K562 (cell line): ENCODE measurements at regions of chr11 and their contacts with region 1.

Region 1: DNA sequence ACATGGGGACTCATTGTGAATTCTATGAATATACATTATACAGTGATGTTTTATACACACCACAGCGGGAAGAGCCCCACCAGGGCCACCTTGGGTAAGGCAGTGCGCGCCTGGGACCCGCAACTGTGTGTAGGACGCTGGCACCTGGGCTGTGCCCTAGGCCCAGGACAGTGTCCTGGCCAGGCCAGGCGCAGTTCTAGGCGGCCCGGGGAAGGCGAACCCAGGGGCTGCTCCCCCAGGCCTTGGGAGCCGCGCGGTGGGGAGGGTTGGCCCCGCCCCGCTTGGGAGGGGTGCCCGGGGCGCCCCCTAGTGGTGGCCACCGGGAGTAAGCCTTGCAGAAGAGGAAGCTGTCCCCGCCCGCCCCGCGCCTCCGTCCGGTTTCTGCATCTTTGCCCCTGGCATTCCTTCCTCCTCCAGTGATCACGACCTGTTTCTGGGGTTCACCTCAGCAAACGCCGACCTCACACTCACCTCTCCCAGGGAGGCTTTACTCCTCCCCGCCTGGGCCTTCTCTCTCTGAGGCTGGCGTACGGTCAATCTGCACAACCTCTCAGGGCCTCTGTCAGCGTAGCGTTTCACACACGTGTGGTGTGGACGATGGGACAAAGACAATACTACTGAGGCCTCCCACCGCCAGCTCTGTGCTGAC is 9.5 kb upstream of the EHD1 start:
- DNase-seq: peak; percentile 90 to 92 (median 92)
- ATAC-seq: peak; percentile 83
- H3K4me3 ChIP-seq: peak overlapping the region; percentile 8; the same call in 1 of the 2 replicates
- H3K27ac ChIP-seq: peak overlapping the region; percentile 82
- H3K4me1 ChIP-seq: peaks cover 44 to 80% of the 10 kb centered on the region in 2 experiments
- H3K27me3 ChIP-seq: no peaks in the 10 kb centered on the region
- CTCF ChIP-seq: peak; percentile 92 to 93 (median 92)
- EP300 ChIP-seq: no peak; the same call in 1 of the 2 replicates
- POLR2A ChIP-seq: peak; percentile 66
- RAD21 ChIP-seq: peak; percentile 41 to 55; a peak in 3 of 4 replicates

Region 2: DNA sequence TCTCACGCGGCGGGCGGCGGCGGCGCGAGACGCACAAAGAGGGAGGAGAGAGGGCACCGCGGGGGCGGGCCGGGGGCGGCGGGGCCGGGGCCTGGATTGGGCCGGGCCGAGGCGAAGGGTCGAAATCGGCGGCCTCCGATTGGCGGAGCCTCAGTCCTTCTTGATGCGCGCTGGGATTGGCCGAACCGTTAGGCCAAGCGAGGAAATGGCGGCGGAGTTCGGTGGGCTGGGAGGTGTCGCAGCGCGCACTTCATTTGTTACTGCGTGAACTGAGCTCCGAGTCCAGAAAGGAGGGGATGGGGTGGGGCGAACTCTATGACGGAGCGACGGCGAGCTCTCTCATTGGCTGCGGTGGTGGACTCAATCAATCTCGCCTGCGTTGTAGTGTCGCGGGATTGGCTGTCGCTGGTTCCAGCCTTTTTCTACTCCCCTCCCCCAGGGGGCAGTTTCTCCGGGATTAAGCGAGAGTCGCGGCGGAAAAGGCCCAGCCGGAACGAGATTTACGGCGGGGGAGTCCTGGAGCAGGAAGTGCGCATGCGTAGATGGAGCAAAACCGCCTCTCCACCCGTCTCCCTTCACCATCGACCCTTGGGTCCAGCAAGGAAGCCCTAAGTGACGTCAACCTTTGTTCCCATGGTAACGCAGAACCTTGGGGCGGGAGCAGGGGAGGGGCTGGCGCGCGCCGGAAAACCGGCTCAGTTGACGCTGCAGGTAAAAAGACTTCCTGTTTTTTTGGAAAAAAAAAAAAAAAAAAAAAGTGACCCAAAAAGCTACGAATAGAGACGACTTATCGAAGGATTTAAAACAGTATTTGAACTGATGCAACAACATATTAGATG is 109.2 kb before region 1 on chr11 and contains the start of gene SF1:
- CTCF ChIA-PET with region 1: no interaction called
- POLR2A ChIA-PET with region 1: interaction called, 3 read pairs
- in situ Hi-C with region 1: no loop called
- intact Hi-C with region 1: loop called (anchors 5 kb)
- DNase-seq: peak; percentile 96 to 100 (median 98)
- ATAC-seq: peak; percentile 97
- H3K4me3 ChIP-seq: peak within 1 kb of the TSS; percentile 67
- H3K27ac ChIP-seq: peak within 1 kb of the TSS; percentile 97
- H3K4me1 ChIP-seq: peaks cover 6 to 18% of the 10 kb centered on the region in 2 experiments; a peak in 3 of 5 replicates
- H3K27me3 ChIP-seq: no peaks in the 10 kb centered on the region
- CTCF ChIP-seq: peak; percentile 13 to 42 (median 17); a peak in 3 of 6 replicates
- EP300 ChIP-seq: peak; percentile 54
- POLR2A ChIP-seq: peak; percentile 89
- RAD21 ChIP-seq: no peak
- polyA plus RNA-seq, gene SF1: 13.1 to 14.0 TPM

Region 3: DNA sequence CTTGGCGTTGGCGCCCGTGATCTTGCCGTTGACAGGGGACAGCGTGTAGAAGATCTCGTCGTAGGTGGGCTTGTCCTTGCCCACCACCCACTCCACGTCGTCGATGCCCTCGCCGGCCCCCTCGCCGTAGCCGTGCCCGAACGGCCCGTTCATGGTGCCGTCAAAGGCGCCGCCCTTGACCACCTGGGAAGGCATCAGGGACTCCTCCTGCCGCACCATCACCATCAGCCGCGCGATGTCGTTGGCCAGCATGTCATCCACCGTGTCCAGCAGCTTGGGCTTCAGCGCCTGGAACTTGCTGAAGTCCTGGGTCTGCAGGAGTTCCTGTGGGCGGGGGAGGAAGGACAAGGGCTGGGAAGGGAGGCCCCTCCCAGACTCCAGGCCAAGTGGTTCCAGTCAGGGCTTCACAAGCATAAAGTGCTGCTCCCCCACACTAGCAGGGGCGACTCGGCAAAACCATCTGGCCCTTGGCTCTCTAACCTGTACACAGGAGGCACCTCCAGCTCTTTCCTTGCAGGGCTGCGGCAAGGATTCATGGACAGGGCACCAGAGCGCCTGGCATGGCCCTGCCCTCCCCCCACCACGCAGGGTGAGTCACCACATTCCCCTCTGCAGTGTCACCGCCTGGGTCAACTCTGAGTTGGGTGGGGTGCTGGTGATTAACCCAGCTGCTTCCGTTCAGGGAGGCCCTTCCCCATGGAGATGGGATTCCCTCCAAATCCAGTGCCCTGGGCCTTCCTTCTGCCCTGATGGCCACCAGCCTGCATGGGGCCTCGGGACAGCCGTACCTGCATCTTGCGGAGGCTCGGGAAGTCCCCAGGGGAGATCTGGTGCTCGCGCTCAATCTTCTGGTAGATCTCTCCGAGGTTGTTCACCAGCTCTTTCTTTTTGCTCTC is 33.1 kb before region 1 on chr11:
- CTCF ChIA-PET with region 1: no interaction called
- POLR2A ChIA-PET with region 1: interaction called, 12 read pairs
- in situ Hi-C with region 1: loop called (anchors 5 kb)
- intact Hi-C with region 1: no loop called
- DNase-seq: peak; percentile 80 to 86 (median 83)
- ATAC-seq: peak; percentile 85
- H3K4me3 ChIP-seq: no peak overlapping the region
- H3K27ac ChIP-seq: peak overlapping the region; percentile 70
- H3K4me1 ChIP-seq: peaks cover 35 to 79% of the 10 kb centered on the region in 2 experiments
- H3K27me3 ChIP-seq: no peaks in the 10 kb centered on the region
- CTCF ChIP-seq: no peak
- EP300 ChIP-seq: peak; percentile 73; the same call in 1 of the 2 replicates
- POLR2A ChIP-seq: no peak
- RAD21 ChIP-seq: no peak

Region 4: GRCh38 chr11:64870176-64870892 is 17.5 kb before region 1 on chr11:
- CTCF ChIA-PET with region 1: no interaction called
- POLR2A ChIA-PET with region 1: interaction called, 7 read pairs
- in situ Hi-C with region 1: no loop called
- intact Hi-C with region 1: loop called (anchors 2 kb)
- DNase-seq: peak; percentile 81 to 85 (median 84)
- ATAC-seq: peak; percentile 76
- H3K4me3 ChIP-seq: peak overlapping the region; percentile 9; the same call in 1 of the 2 replicates
- H3K27ac ChIP-seq: peak overlapping the region; percentile 66
- H3K4me1 ChIP-seq: peaks cover 30 to 52% of the 10 kb centered on the region in 2 experiments
- H3K27me3 ChIP-seq: no peaks in the 10 kb centered on the region; a peak in 1 of 5 replicates
- CTCF ChIP-seq: no peak
- EP300 ChIP-seq: peak; percentile 31; the same call in 1 of the 2 replicates
- POLR2A ChIP-seq: no peak
- RAD21 ChIP-seq: no peak

Region 5: DNA sequence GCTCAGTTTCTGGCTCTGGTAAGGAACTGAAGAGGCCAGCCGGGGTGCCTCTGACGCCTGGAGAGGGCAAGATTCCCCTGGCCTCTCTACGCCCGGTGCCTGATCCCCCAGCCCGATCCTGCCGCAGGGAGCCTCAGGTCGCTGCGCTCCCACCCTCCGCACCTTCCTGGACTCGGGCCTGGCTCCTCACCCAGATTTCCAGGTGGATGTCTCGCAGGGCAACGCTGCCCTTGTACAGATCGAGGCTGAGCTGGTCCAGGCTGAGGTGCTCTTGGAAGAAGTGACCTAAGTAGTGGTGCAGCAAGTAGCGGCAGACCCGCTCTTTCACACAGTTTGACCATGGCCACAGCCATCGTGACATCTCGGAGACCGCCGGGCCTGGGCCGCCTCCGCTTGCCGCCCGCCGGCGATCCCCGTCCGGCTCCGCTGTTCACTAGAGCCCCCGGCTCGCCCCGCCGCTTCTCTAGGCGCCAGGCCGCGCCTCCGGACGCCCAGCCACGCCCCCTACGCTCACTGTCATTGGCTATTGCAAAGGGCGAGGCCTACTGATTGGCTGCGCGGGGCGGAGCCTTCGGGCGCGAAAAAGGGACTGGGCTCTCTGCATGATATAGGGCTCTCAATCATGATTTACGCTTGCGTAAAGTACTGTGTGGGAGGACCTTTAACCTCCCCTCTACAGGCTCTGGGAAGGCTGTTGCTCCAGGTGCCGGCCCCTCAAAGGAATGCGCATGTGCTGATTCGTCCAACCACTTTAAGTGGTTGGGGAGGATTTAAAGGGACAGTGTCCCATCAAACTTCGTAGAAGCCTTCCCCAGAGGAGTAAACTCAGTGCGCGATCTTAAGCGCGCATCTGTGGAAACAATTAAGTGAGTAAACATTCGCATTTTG is 29.1 kb after region 1 on chr11 and contains the start of gene ATG2A:
- CTCF ChIA-PET with region 1: no interaction called
- POLR2A ChIA-PET with region 1: interaction called, 10 read pairs
- in situ Hi-C with region 1: no loop called
- intact Hi-C with region 1: loop called (anchors 1 kb)
- DNase-seq: peak; percentile 93 to 99 (median 95)
- ATAC-seq: peak; percentile 96
- H3K4me3 ChIP-seq: peak within 1 kb of the TSS; percentile 87
- H3K27ac ChIP-seq: peak within 1 kb of the TSS; percentile 87
- H3K4me1 ChIP-seq: peaks cover 20 to 47% of the 10 kb centered on the region in 2 experiments; a peak in 4 of 5 replicates
- H3K27me3 ChIP-seq: no peaks in the 10 kb centered on the region
- CTCF ChIP-seq: no peak
- EP300 ChIP-seq: no peak
- POLR2A ChIP-seq: peak; percentile 86
- RAD21 ChIP-seq: no peak
- polyA plus RNA-seq, gene ATG2A: 0.25 to 0.53 TPM

Region 6: GRCh38 chr11:65117216-65118096 is 229.6 kb after region 1 on chr11 and contains the start of gene ZNHIT2:
- CTCF ChIA-PET with region 1: no interaction called
- POLR2A ChIA-PET with region 1: interaction called, 3 read pairs
- in situ Hi-C with region 1: no loop called
- intact Hi-C with region 1: loop called (anchors 10 kb)
- DNase-seq: peak; percentile 84 to 99 (median 90)
- ATAC-seq: peak; percentile 78
- H3K4me3 ChIP-seq: peak within 1 kb of the TSS; percentile 95
- H3K27ac ChIP-seq: peak within 1 kb of the TSS; percentile 86
- H3K4me1 ChIP-seq: peaks cover 33 to 41% of the 10 kb centered on the region in 2 experiments
- H3K27me3 ChIP-seq: no peaks in the 10 kb centered on the region
- CTCF ChIP-seq: peak; percentile 85 to 97 (median 93)
- EP300 ChIP-seq: peak; percentile 18; the same call in 1 of the 2 replicates
- POLR2A ChIP-seq: peak; percentile 92
- RAD21 ChIP-seq: peak; percentile 84 to 85
- polyA plus RNA-seq, gene ZNHIT2: 0.08 to 0.20 TPM

Region 7: GRCh38 chr11:65662799-65663638 is 775.1 kb after region 1 on chr11 and contains the start of gene RELA:
- CTCF ChIA-PET with region 1: no interaction called
- POLR2A ChIA-PET with region 1: no interaction called
- in situ Hi-C with region 1: no loop called
- intact Hi-C with region 1: no loop called
- DNase-seq: peak; percentile 93 to 94 (median 94)
- ATAC-seq: peak; percentile 92
- H3K4me3 ChIP-seq: peak within 1 kb of the TSS; percentile 92
- H3K27ac ChIP-seq: peak within 1 kb of the TSS; percentile 87
- H3K4me1 ChIP-seq: peaks cover 7 to 20% of the 10 kb centered on the region in 2 experiments; a peak in 4 of 5 replicates
- H3K27me3 ChIP-seq: no peaks in the 10 kb centered on the region
- CTCF ChIP-seq: no peak
- EP300 ChIP-seq: no peak
- POLR2A ChIP-seq: peak; percentile 81
- RAD21 ChIP-seq: no peak
- polyA plus RNA-seq, gene RELA: 6.0 to 6.4 TPM